A549 (cell line): ENCODE measurements at regions of chr1 and their contacts with region 1.

Region 1: GRCh38 chr1:35726450-35727433 is 8.1 kb upstream of the C1orf216 start:
- DNase-seq: peak; percentile 44 to 52
- ATAC-seq: peak; percentile 94 to 97
- H3K4me3 ChIP-seq: no peak overlapping the region
- H3K27ac ChIP-seq: no peak overlapping the region
- H3K4me1 ChIP-seq: no peaks in the 10 kb centered on the region
- CTCF ChIP-seq: peak; percentile 73
- EP300 ChIP-seq: no peak
- POLR2A ChIP-seq: no peak
- RAD21 ChIP-seq: peak; percentile 71 to 72

Region 2: GRCh38 chr1:35345439-35345981 is 381.2 kb before region 1 on chr1:
- CTCF ChIA-PET with region 1: no interaction called
- POLR2A ChIA-PET with region 1: no interaction called
- DNase-seq: peak in 1 of 2 experiments; percentile 2
- ATAC-seq: peak in 1 of 2 experiments; percentile 43; a peak in 2 of 6 replicates
- H3K4me3 ChIP-seq: no peak overlapping the region
- H3K27ac ChIP-seq: no peak overlapping the region
- H3K4me1 ChIP-seq: 0 out of 3 replicates have a peak, but pooled peaks cover 6% of the 10 kb centered on the region
- CTCF ChIP-seq: no peak
- EP300 ChIP-seq: no peak
- POLR2A ChIP-seq: no peak
- RAD21 ChIP-seq: no peak

Region 3: DNA sequence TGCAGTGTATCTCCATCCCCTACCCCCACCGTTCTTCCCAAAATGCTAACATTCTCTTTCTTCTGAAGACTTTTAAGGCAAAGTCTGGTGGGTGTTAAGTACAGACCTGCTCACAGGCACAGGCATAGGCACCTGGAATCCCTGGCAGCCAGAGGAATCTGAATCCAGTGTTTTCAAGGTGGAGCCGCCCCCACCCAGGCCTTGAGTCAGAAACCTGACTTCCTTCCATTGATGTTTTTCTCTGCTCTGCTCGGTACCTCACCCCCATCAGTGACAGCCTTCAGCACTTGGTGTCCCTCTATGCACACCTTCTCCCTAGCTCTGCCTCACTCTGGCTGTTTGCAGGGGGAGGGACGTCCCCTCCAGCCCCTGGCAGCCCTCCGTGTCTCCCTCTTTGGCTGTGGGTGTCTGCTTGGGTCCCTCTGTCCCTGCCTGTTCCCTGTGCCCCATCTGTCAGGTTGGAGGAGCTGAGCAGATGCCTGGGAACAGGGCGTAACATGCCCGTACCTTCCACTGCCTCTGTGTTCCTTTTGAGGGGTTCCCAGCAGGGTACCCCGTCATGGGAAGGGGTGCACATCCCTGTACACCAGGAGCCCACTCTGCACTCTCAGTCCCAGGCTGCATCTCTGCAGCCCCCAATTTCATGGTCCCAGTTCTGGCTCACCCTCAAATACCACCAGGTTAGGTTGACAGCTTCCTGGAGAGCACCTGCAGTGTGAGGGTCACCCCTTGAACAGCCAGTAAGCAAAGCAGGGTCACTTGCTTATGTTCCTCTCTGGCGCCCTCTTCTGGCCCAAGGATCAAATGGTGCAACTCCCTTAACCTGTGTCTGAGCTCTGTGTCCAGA is 162.5 kb before region 1 on chr1:
- CTCF ChIA-PET with region 1: interaction called, 67 read pairs
- POLR2A ChIA-PET with region 1: no interaction called
- DNase-seq: peak; percentile 69 to 81
- ATAC-seq: peak; percentile 60 to 83
- H3K4me3 ChIP-seq: no peak overlapping the region
- H3K27ac ChIP-seq: no peak overlapping the region
- H3K4me1 ChIP-seq: peaks cover under 1% of the 10 kb centered on the region; the same call in 1 of the 3 replicates
- CTCF ChIP-seq: peak; percentile 70
- EP300 ChIP-seq: no peak
- POLR2A ChIP-seq: no peak
- RAD21 ChIP-seq: peak; percentile 47 to 48

Region 4: DNA sequence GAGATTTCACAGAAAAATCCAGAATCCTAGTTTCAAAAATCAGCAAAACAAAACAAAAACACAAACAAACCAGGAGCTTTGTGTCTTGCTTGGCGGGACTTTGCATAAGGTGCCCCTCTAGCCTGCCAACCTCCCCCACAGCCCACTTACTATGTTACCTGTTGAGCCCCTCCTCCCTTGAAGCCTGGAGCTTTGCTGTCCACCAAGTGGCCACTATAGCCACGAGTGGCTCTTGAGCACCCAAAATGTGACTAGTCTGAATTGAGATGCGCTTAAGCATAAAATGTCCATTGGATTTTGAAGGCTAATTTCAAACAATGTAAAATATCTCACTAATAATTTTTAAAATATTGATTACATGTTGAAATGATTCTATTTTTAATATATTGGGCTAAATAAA is 141.5 kb before region 1 on chr1:
- CTCF ChIA-PET with region 1: interaction called, 15 read pairs
- POLR2A ChIA-PET with region 1: no interaction called
- DNase-seq: no peak
- ATAC-seq: no peak
- H3K4me3 ChIP-seq: no peak overlapping the region
- H3K27ac ChIP-seq: no peak overlapping the region
- H3K4me1 ChIP-seq: no peaks in the 10 kb centered on the region
- CTCF ChIP-seq: no peak
- EP300 ChIP-seq: no peak
- POLR2A ChIP-seq: no peak
- RAD21 ChIP-seq: no peak

Region 5: GRCh38 chr1:35715568-35716002 is 11.2 kb before region 1 on chr1:
- CTCF ChIA-PET with region 1: interaction called, 69 read pairs
- POLR2A ChIA-PET with region 1: interaction called, 3 read pairs
- DNase-seq: peak; percentile 67 to 74
- ATAC-seq: peak; percentile 67 to 75; a peak in 5 of 6 replicates
- H3K4me3 ChIP-seq: no peak overlapping the region
- H3K27ac ChIP-seq: no peak overlapping the region
- H3K4me1 ChIP-seq: peaks cover 17% of the 10 kb centered on the region
- CTCF ChIP-seq: peak; percentile 72
- EP300 ChIP-seq: no peak
- POLR2A ChIP-seq: no peak
- RAD21 ChIP-seq: peak; percentile 49 to 63

Region 6: DNA sequence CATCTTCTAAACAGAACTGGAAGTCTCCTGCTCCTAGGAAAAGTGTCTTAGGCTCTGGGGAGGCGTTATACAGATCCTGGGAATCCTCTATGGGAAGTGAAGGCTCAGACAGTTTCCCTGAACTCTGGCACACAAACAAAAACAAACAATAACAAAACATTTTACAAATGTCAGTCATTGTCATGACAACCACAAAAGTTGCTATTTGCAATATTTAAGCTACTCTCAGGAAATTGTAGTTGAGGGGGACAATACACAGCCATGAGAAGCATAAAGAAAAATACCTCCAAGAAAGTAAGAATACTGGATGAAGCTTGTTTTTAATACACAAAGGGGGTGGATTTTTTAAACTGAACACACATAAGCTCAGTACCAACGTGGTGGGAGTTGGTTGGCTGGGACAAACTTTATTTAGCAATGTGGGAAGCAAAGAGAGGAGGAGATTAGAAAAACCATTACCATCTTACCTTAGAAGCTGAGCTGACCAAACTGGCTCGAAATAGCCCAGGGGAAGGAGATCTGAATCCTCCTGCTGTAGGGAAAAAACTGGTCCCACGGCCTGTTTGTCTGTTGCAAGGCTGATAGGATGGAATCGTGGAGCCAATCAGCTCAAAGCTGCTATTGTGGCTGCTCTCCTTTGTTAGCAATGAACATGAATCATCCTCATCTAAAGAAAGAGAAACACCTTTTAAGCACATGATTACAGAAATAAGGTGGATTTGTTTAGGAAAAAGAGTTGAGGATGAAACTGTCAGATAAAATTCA is 21.4 kb after region 1 on chr1:
- CTCF ChIA-PET with region 1: interaction called, 53 read pairs
- POLR2A ChIA-PET with region 1: no interaction called
- DNase-seq: no peak
- ATAC-seq: no peak
- H3K4me3 ChIP-seq: no peak overlapping the region
- H3K27ac ChIP-seq: no peak overlapping the region
- H3K4me1 ChIP-seq: no peaks in the 10 kb centered on the region
- CTCF ChIP-seq: no peak
- EP300 ChIP-seq: no peak
- POLR2A ChIP-seq: no peak
- RAD21 ChIP-seq: no peak

Region 7: GRCh38 chr1:35777109-35777508 is 50.4 kb after region 1 on chr1:
- CTCF ChIA-PET with region 1: interaction called, 11 read pairs
- POLR2A ChIA-PET with region 1: no interaction called
- DNase-seq: no peak
- ATAC-seq: no peak
- H3K4me3 ChIP-seq: no peak overlapping the region
- H3K27ac ChIP-seq: no peak overlapping the region
- H3K4me1 ChIP-seq: no peaks in the 10 kb centered on the region
- CTCF ChIP-seq: no peak
- EP300 ChIP-seq: no peak
- POLR2A ChIP-seq: no peak
- RAD21 ChIP-seq: no peak